Activated CD4-positive, alpha-beta memory T cell treated with anti-CD3 and anti-CD28 coated beads, Interleukin-2, amount 10 ng/mL, durations not matched to agents 7 days and 5 days (primary cell): ENCODE measurements at regions of chr17 and their contacts with region 1.

Region 1: GRCh38 chr17:48593840-48594537 is 410 bp upstream of the HOXB5 start:
- DNase-seq: peak; percentile 84
- H3K4me3 Mint-ChIP-seq: peak overlapping the region; percentile 71
- H3K27ac Mint-ChIP-seq: no peak overlapping the region
- H3K4me1 Mint-ChIP-seq: peaks cover 53% of the 10 kb centered on the region
- H3K27me3 Mint-ChIP-seq: peaks cover 86% of the 10 kb centered on the region

Region 2: DNA sequence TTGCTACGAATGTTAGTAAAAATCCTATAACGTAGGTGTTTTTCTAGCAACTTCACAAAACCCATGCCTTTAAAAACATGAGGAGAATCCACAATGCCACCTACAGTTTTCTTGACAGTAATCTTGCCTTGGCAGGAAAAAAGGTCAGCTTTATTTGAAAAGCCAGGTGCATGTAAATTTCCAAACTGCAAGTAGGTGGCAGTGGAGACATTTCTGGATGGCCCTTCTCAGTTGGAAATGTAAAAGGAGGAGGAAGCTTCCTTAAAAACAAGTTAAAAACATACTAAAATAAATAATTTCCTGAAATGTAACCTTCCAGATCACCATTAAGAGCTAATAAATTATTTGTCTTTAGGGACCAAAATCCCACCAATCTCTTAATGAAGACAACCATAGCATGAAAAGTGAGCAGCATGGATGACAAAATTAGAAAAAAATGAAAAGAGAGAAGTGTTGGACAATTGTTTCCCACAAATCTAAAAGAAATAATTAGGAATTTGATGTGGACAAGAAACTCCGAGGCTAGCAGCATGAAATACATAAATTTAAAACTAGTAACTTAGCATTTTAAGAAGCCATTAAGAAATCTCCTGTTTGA is 334.2 kb before region 1 on chr17:
- CTCF ChIA-PET with region 1: interaction called, 57 read pairs
- POLR2A ChIA-PET with region 1: no interaction called
- DNase-seq: no peak
- H3K4me3 Mint-ChIP-seq: no peak overlapping the region
- H3K27ac Mint-ChIP-seq: no peak overlapping the region
- H3K4me1 Mint-ChIP-seq: peaks cover 8% of the 10 kb centered on the region
- H3K27me3 Mint-ChIP-seq: no peaks in the 10 kb centered on the region

Region 3: GRCh38 chr17:48322060-48322459 is 271.9 kb before region 1 on chr17:
- CTCF ChIA-PET with region 1: interaction called, 13 read pairs
- POLR2A ChIA-PET with region 1: interaction called, 5 read pairs
- DNase-seq: no peak
- H3K4me3 Mint-ChIP-seq: no peak overlapping the region
- H3K27ac Mint-ChIP-seq: no peak overlapping the region
- H3K4me1 Mint-ChIP-seq: no peaks in the 10 kb centered on the region
- H3K27me3 Mint-ChIP-seq: no peaks in the 10 kb centered on the region

Region 4: DNA sequence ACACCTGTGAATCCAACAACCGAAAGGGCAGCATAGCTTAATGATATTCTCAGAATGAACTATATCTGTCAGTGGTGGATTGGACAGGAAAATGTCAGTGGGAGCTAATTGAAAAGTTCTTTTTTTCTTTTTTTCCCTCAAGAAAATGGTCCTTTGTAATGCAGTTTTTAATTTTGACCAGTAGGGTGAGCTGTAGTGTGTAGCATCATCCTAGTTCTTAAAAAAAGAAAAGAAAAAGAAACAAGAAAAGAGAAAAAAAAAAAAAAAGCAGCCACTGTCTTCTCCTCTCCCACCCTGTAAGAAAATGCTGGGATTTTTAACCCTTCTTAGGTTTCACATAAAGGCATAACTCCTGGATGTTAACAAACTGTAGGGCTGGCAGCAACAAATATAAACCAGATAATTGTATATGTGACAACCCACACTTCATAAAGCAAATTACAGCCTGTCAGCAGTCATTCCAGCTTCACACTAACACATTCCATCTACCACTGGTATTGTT is 242.1 kb before region 1 on chr17:
- CTCF ChIA-PET with region 1: interaction called, 33 read pairs
- POLR2A ChIA-PET with region 1: interaction called, 3 read pairs
- DNase-seq: no peak
- H3K4me3 Mint-ChIP-seq: no peak overlapping the region
- H3K27ac Mint-ChIP-seq: no peak overlapping the region
- H3K4me1 Mint-ChIP-seq: peaks cover 11% of the 10 kb centered on the region
- H3K27me3 Mint-ChIP-seq: no peaks in the 10 kb centered on the region

Region 5: GRCh38 chr17:48618256-48618897 is 24.4 kb after region 1 on chr17:
- CTCF ChIA-PET with region 1: interaction called, 14 read pairs
- POLR2A ChIA-PET with region 1: interaction called, 7 read pairs
- DNase-seq: peak; percentile 84
- H3K4me3 Mint-ChIP-seq: no peak overlapping the region
- H3K27ac Mint-ChIP-seq: no peak overlapping the region
- H3K4me1 Mint-ChIP-seq: peaks cover 32% of the 10 kb centered on the region
- H3K27me3 Mint-ChIP-seq: peaks cover 93% of the 10 kb centered on the region